ENCODE measurements at regions of chr14 and their contacts with region 1.

Region 1: DNA sequence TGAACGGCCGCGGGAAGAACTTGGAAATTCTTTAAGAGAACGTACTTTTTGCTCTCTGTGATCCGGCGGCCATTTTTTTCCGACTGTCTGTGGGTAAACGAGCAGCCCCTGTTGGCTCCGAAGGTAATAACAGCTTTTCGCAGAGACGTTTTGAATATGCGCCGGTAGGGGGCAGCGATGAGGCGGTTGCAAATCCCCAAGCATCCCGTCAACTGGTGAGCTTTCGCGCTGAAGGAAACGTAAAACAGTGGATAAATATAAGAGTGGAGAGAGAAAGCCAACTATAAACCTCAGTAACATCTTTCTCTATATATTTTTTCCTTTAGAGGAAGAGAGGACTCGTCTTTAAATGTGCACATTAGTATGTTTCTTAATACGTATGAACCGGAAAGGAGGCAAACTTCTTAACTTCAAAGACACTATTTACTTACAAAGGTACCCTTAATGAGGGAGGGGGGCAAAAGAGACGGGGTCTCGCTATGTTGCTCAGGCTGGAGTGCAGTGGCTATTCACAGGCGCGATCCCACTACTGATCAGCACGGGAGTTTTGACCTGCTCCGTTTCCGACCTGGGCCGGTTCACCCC is 9.6 kb upstream of the NEMF start:
- DNase-seq: peak; percentile 69 to 89 (median 85)
- H3K4me3 ChIP-seq: peak overlapping the region; percentile 94
- H3K4me3 Mint-ChIP-seq: no peak overlapping the region
- H3K27ac ChIP-seq: peak overlapping the region; percentile 95
- H3K27ac Mint-ChIP-seq: no peak overlapping the region
- H3K4me1 ChIP-seq: peaks cover 39% of the 10 kb centered on the region
- H3K4me1 Mint-ChIP-seq: peaks cover 10 to 13% (median 12%) of the 10 kb centered on the region in 3 donors
- H3K27me3 ChIP-seq: no peaks in the 10 kb centered on the region
- H3K27me3 Mint-ChIP-seq: peaks cover 0 to 13% of the 10 kb centered on the region in 2 donors

Region 2: DNA sequence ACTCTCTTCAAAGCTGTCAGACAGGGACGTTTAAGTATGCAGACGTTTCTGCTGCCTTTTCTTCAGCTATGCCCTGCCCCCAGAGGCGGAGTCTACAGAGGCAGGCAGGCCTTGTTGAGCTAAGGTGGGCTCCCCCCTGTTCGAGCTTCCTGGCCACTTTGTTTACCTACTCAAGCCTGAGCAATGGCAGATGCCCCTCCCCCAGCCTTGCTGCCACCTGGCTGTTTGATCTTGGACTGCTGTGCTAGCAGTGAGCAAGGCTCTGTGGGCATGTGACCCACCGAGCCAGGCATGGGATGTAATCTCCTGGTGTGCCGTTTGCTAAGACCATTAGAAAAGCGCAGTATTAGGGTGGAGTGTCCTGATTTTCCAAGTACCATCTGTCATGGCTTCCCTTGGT is 1286.4 kb before region 1 on chr14:
- CTCF ChIA-PET with region 1: no interaction called
- POLR2A ChIA-PET with region 1: no interaction called
- DNase-seq: no peak
- H3K4me3 ChIP-seq: no peak overlapping the region
- H3K4me3 Mint-ChIP-seq: no peak overlapping the region
- H3K27ac ChIP-seq: no peak overlapping the region
- H3K27ac Mint-ChIP-seq: no peak overlapping the region
- H3K4me1 ChIP-seq: no peaks in the 10 kb centered on the region
- H3K4me1 Mint-ChIP-seq: no peaks in the 10 kb centered on the region
- H3K27me3 ChIP-seq: no peaks in the 10 kb centered on the region
- H3K27me3 Mint-ChIP-seq: no peaks in the 10 kb centered on the region

Region 3: GRCh38 chr14:49550286-49551184 is 311.6 kb before region 1 on chr14:
- CTCF ChIA-PET with region 1: no interaction called
- POLR2A ChIA-PET with region 1: no interaction called
- DNase-seq: no peak
- H3K4me3 ChIP-seq: no peak overlapping the region
- H3K4me3 Mint-ChIP-seq: no peak overlapping the region
- H3K27ac ChIP-seq: no peak overlapping the region
- H3K27ac Mint-ChIP-seq: no peak overlapping the region
- H3K4me1 ChIP-seq: no peaks in the 10 kb centered on the region
- H3K4me1 Mint-ChIP-seq: no peaks in the 10 kb centered on the region
- H3K27me3 ChIP-seq: no peaks in the 10 kb centered on the region
- H3K27me3 Mint-ChIP-seq: peaks cover 0 to 3% of the 10 kb centered on the region in 2 donors

Region 4: GRCh38 chr14:49620182-49621113 is 241.7 kb before region 1 on chr14 and contains the starts of genes MGAT2 and RPL36AL:
- CTCF ChIA-PET with region 1: interaction called, 9 read pairs
- POLR2A ChIA-PET with region 1: interaction called, 21 read pairs
- DNase-seq: peak; percentile 91 to 96 (median 96)
- H3K4me3 ChIP-seq: peak within 1 kb of the TSS; percentile 80
- H3K4me3 Mint-ChIP-seq: peak within 1 kb of the TSS; percentile 94 to 99 (median 98)
- H3K27ac ChIP-seq: peak within 1 kb of the TSS; percentile 99
- H3K27ac Mint-ChIP-seq: peak within 1 kb of the TSS; percentile 98 to 100 (median 100)
- H3K4me1 ChIP-seq: peaks cover 50% of the 10 kb centered on the region
- H3K4me1 Mint-ChIP-seq: peaks cover 57 to 68% (median 65%) of the 10 kb centered on the region in 3 donors
- H3K27me3 ChIP-seq: no peaks in the 10 kb centered on the region
- H3K27me3 Mint-ChIP-seq: no peaks in the 10 kb centered on the region
- total RNA-seq, gene MGAT2: 57.7 to 60.2 TPM
- total RNA-seq, gene RPL36AL: 236 to 273 TPM

Region 5: DNA sequence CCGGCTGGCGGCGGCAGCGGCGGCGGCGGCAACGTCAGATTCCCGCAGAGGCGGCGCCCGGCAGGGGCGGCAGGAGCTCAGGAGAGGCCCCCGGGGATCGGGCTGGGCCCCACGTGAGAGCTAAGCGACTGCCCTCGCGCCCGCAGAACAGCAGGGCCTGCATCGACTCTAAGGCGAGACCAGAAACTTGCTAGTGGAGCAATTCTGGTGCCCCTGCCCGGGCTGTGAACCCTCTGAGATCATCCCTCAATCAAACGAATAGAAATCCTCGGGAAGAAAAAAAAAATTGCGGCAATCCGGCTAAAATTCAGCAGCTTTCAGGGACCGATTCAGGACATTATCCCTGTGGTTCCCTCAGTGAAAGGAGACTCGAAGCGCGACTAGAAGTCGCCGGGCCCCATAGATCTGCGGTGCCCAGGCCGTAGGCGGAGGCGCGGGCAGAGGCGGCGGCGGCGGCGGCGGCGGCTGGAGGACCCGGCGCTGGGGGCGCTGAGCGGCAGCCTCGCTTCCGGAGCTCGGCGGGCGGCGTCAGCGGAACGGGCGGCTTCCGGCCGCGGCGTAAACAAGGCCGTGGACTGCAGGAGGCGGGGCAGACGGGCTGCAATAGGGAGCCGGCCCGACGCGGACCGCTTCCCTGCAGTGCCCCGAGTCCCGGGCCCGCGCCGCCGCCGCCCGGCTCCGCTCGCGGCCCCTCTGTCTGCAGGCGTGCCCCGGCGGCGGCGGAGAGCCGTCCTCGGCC is 94.5 kb before region 1 on chr14 and contains the start of gene KLHDC2:
- CTCF ChIA-PET with region 1: interaction called, 6 read pairs
- POLR2A ChIA-PET with region 1: interaction called, 12 read pairs
- DNase-seq: peak; percentile 83 to 91 (median 89)
- H3K4me3 ChIP-seq: peak within 1 kb of the TSS; percentile 99
- H3K4me3 Mint-ChIP-seq: peak within 1 kb of the TSS; percentile 96 to 99 (median 98)
- H3K27ac ChIP-seq: peak within 1 kb of the TSS; percentile 98
- H3K27ac Mint-ChIP-seq: peak within 1 kb of the TSS; percentile 98 to 100 (median 99)
- H3K4me1 ChIP-seq: peaks cover 28% of the 10 kb centered on the region
- H3K4me1 Mint-ChIP-seq: peaks cover 30 to 43% (median 42%) of the 10 kb centered on the region in 3 donors
- H3K27me3 ChIP-seq: no peaks in the 10 kb centered on the region
- H3K27me3 Mint-ChIP-seq: peaks cover 0 to 3% of the 10 kb centered on the region in 2 donors
- total RNA-seq, gene KLHDC2: 28.9 to 29.0 TPM

Region 6: DNA sequence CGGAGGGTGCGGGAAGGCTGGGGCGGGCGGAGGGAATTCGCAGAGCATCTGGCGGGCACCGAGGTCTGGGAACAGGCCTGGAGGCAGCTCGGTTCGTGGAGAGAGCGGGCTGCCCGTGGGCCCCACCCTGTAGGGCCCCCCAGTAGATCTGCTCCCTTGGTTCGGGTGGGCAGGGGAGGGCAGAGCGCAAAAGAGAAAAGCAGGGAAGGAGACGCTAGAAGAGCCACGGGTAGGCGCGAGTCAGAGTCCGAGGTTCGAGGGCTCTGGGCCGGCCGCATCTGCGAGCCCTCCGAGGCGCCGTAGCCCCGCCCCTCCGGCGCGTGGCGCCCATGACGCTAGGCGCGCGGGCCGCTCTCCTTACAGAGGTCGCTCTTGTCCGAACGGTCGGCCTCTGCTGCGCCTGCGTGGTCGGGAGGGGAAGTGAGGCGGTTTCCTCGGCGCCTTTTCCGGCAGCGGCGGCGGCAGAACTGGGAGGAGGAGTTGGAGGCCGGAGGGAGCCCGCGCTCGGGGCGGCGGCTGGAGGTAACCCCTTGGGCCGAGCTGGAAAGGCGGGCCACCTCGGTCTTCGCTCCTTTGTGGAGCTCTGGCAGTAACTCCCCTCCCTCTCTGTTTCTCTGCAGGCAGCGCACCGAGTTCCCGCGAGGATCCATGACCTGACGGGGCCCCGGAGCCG is 30.6 kb after region 1 on chr14 and contains the start of gene ARF6:
- CTCF ChIA-PET with region 1: interaction called, 28 read pairs
- POLR2A ChIA-PET with region 1: interaction called, 26 read pairs
- DNase-seq: peak; percentile 92 to 96 (median 94)
- H3K4me3 ChIP-seq: peak within 1 kb of the TSS; percentile 85
- H3K4me3 Mint-ChIP-seq: peak within 1 kb of the TSS; percentile 92 to 100 (median 99)
- H3K27ac ChIP-seq: peak within 1 kb of the TSS; percentile 97
- H3K27ac Mint-ChIP-seq: peak within 1 kb of the TSS; percentile 97 to 100 (median 99)
- H3K4me1 ChIP-seq: peaks cover 31% of the 10 kb centered on the region
- H3K4me1 Mint-ChIP-seq: peaks cover 30 to 44% (median 32%) of the 10 kb centered on the region in 3 donors
- H3K27me3 ChIP-seq: no peaks in the 10 kb centered on the region
- H3K27me3 Mint-ChIP-seq: peaks cover 0 to 1% of the 10 kb centered on the region in 2 donors
- total RNA-seq, gene ARF6: 168 TPM

Region 7: DNA sequence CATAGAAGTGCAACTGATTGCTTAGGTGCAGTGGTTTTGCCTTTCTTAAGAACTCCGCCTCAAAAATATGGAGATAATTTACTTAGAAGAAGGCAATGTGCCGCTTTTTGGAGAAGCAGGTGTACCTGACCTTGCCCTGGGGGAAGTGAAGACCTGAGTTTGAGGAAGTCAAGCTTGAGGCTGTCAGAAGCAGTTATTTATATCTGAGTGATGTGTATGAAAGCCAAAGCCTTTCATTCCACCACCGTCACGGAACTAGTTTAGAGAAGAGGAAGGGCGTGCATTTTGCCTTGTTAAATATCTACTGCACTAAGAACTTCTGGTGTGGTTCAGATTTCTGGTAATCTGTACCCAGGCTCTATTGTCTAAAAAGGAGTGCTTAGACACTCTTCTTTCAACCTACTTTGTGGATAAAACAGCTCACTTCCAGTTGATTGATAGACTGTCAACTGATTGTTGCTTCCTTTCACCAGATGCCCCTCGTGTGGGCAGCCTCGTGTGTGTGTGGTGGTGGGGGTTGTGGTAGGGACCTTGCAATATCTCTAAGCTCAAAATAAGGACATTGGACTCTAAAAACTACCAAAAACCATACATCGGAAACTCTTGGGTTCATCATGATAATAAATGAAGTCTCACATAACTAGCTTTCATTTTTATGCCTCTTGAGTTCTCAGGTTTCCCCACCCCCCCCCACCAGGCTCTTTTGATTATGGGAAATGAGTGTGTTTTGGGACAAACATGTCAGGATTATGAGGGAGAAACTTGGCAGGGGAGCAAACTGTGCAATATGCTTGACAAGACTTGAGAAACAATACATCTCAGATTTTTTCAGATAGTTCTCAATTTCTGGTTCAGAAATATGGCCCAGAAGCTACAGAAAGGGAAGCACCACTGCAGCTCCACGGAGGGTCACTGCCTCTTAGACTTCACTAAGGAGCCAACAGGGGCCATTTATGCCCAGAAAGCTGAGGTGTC is 109.3 kb after region 1 on chr14:
- CTCF ChIA-PET with region 1: interaction called, 22 read pairs
- POLR2A ChIA-PET with region 1: interaction called, 20 read pairs
- DNase-seq: peak in 3 of 5 donors; percentile 61 to 84 (median 66)
- H3K4me3 ChIP-seq: peak overlapping the region; percentile 41
- H3K4me3 Mint-ChIP-seq: peak overlapping the region; percentile 60 to 85 (median 79)
- H3K27ac ChIP-seq: peak overlapping the region; percentile 54
- H3K27ac Mint-ChIP-seq: peak overlapping the region; percentile 91 to 100 (median 94)
- H3K4me1 ChIP-seq: peaks cover 56% of the 10 kb centered on the region
- H3K4me1 Mint-ChIP-seq: peaks cover 41 to 68% (median 62%) of the 10 kb centered on the region in 3 donors
- H3K27me3 ChIP-seq: no peaks in the 10 kb centered on the region
- H3K27me3 Mint-ChIP-seq: peaks cover 0 to 2% of the 10 kb centered on the region in 2 donors

Region 8: GRCh38 chr14:50060871-50061663 is 198.9 kb after region 1 on chr14:
- CTCF ChIA-PET with region 1: interaction called, 85 read pairs
- POLR2A ChIA-PET with region 1: interaction called, 53 read pairs
- DNase-seq: peak in 4 of 5 donors; percentile 32 to 57 (median 43)
- H3K4me3 ChIP-seq: peak overlapping the region; percentile 61
- H3K4me3 Mint-ChIP-seq: peak overlapping the region; percentile 77 to 96 (median 90)
- H3K27ac ChIP-seq: peak overlapping the region; percentile 93
- H3K27ac Mint-ChIP-seq: peak overlapping the region; percentile 89 to 100 (median 99)
- H3K4me1 ChIP-seq: peaks cover 73% of the 10 kb centered on the region
- H3K4me1 Mint-ChIP-seq: peaks cover 71 to 94% (median 88%) of the 10 kb centered on the region in 3 donors
- H3K27me3 ChIP-seq: no peaks in the 10 kb centered on the region
- H3K27me3 Mint-ChIP-seq: no peaks in the 10 kb centered on the region

Region 9: DNA sequence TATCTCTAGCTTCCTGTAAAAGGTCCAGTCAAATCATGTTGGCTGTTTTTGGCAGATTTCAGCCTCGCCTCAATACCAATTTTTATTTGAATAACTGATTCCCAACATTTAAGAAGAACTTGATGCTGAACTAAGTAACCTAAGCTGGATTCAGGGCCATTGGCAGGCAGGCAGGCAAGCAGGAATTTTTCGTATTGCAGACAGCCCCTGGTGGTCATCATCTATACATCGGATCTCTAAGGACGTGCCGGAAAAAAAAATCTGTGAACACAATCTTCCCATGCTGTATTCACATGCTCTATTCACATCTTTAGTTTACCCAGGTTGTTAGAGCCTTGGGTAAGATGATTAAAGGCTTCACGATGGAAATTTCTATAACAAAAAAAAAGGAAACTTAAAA is 247.2 kb after region 1 on chr14:
- CTCF ChIA-PET with region 1: interaction called, 47 read pairs
- POLR2A ChIA-PET with region 1: interaction called, 4 read pairs
- DNase-seq: no peak
- H3K4me3 ChIP-seq: no peak overlapping the region
- H3K4me3 Mint-ChIP-seq: no peak overlapping the region
- H3K27ac ChIP-seq: no peak overlapping the region
- H3K27ac Mint-ChIP-seq: peak overlapping the region in 2 of 8 donors; percentile 17 to 40
- H3K4me1 ChIP-seq: peaks cover 8% of the 10 kb centered on the region
- H3K4me1 Mint-ChIP-seq: peaks cover 8 to 33% (median 22%) of the 10 kb centered on the region in 3 donors
- H3K27me3 ChIP-seq: no peaks in the 10 kb centered on the region
- H3K27me3 Mint-ChIP-seq: no peaks in the 10 kb centered on the region

Measured in CD8-positive, alpha-beta memory T cell (primary cell).